HEK293 (cell line): ENCODE measurements at regions of chr14 and their contacts with region 1.

Region 1: DNA sequence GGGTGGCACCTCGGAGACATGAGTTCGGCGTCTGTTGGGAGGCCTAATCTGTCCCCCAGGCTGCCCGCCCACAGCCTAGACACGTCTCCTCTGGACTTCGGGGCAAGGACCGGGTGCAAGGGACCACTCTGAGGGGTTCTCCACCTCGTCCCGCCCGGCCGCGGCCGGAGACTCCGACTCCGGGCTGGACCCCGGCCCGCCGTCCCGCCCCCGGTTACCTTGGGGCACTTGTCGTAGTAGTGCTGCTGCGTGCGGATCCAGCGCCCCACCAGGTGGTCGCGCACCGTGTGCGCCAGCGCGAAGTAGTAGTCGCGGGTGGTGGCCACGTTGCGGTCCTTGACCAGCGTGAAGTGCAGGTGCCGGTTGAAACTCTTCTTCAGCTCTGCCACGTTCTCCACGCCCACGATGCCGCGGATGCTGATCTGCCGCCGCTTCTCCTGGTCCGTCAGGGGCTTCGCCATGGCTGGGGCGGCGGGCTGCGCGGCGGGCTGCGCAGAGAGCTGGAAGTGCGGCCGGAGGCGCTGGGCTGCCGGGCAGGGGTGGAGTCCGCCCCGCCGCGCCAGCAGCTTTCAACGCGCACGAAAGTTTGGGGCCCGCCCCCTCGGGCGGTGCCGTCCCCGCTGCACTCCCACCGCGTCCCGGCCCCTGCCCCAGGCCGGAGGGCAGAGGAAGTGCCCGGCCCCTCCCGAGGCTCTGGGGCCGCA is at the start of gene PYGL:
- H3K4me3 ChIP-seq: peak within 1 kb of the TSS; percentile 60
- H3K27ac ChIP-seq: peak within 1 kb of the TSS; percentile 68
- H3K4me1 ChIP-seq: peaks cover 3% of the 10 kb centered on the region; the same call in 1 of the 2 replicates
- CTCF ChIP-seq: peak; percentile 64

Region 2: DNA sequence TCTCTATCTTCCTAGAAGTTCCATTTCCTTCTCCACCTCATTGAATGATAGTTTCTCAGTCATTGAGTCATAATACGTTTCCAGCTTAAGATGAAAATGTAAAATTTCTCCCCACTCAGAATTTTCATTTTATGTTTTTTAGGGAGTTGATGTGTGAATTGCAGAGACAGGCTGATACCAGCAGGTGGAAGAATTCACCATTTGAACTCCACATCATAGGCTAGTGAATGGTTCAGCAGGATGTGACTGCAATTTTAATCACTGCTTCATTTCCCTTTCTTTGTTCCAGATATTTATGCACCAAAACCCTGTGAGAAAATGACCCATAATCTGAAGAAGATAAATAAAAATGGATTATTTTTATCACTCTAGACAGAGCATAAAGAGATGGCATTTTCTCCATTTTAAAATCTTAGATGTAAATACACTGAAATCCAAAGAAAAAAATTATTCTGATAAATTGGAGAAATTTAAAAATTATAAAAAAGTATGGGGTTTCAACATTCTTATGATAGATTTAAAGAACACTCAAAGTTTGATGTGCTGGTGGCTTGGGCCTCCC is 10.8 kb after region 1 on chr14:
- CTCF ChIA-PET with region 1: interaction called, 16 read pairs
- POLR2A ChIA-PET with region 1: interaction called, 4 read pairs
- H3K4me3 ChIP-seq: no peak overlapping the region
- H3K27ac ChIP-seq: no peak overlapping the region
- H3K4me1 ChIP-seq: peaks cover 6% of the 10 kb centered on the region; the same call in 1 of the 2 replicates
- CTCF ChIP-seq: no peak

Region 3: GRCh38 chr14:51006781-51007211 is 62.7 kb after region 1 on chr14:
- CTCF ChIA-PET with region 1: no interaction called
- POLR2A ChIA-PET with region 1: no interaction called
- H3K4me3 ChIP-seq: no peak overlapping the region
- H3K27ac ChIP-seq: no peak overlapping the region
- H3K4me1 ChIP-seq: peaks cover 34% of the 10 kb centered on the region
- CTCF ChIP-seq: no peak

Region 4: DNA sequence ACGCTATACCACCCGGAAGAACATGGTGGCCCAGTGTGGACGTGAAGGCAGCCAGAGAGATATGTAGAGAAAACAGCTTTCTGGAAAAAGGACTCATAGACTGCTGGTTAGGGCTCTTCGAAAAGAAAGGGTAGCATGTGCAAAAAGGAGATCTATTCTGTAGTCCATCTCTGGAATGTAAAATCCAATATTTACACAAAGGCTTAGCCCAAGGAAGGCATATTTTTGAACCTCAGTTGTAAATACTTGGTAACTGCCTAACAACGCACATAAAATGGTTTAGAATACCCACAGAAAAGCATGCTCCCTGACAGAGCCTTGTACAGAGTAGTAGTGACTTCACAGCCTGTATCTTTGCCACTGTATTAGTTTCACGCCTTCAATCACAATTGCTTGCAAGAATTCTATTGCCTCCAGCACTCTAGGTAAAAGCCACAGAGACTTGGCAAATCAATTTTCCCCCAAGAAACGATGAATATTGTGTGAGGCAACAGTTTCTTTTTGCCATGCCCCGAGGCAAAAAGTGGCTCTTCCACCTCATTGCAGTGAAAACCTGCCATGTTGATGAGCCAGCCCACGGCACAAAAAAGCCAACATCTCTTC is 91.6 kb after region 1 on chr14:
- CTCF ChIA-PET with region 1: no interaction called
- POLR2A ChIA-PET with region 1: no interaction called
- H3K4me3 ChIP-seq: no peak overlapping the region
- H3K27ac ChIP-seq: no peak overlapping the region
- H3K4me1 ChIP-seq: no peaks in the 10 kb centered on the region
- CTCF ChIP-seq: no peak

Region 5: GRCh38 chr14:51094901-51095853 is 151.1 kb after region 1 on chr14 and contains the start of gene TRIM9:
- CTCF ChIA-PET with region 1: no interaction called
- POLR2A ChIA-PET with region 1: interaction called, 10 read pairs
- H3K4me3 ChIP-seq: peak within 1 kb of the TSS; percentile 74
- H3K27ac ChIP-seq: peak within 1 kb of the TSS; percentile 96
- H3K4me1 ChIP-seq: peaks cover 28% of the 10 kb centered on the region
- CTCF ChIP-seq: no peak

Region 6: GRCh38 chr14:51498411-51499227 is 554.5 kb after region 1 on chr14:
- CTCF ChIA-PET with region 1: no interaction called
- POLR2A ChIA-PET with region 1: no interaction called
- H3K4me3 ChIP-seq: no peak overlapping the region
- H3K27ac ChIP-seq: no peak overlapping the region
- H3K4me1 ChIP-seq: no peaks in the 10 kb centered on the region
- CTCF ChIP-seq: no peak